Gastrocnemius medialis (tissue), 4 donors: ENCODE measurements at regions of chr1 and their contacts with region 1.

Region 1: DNA sequence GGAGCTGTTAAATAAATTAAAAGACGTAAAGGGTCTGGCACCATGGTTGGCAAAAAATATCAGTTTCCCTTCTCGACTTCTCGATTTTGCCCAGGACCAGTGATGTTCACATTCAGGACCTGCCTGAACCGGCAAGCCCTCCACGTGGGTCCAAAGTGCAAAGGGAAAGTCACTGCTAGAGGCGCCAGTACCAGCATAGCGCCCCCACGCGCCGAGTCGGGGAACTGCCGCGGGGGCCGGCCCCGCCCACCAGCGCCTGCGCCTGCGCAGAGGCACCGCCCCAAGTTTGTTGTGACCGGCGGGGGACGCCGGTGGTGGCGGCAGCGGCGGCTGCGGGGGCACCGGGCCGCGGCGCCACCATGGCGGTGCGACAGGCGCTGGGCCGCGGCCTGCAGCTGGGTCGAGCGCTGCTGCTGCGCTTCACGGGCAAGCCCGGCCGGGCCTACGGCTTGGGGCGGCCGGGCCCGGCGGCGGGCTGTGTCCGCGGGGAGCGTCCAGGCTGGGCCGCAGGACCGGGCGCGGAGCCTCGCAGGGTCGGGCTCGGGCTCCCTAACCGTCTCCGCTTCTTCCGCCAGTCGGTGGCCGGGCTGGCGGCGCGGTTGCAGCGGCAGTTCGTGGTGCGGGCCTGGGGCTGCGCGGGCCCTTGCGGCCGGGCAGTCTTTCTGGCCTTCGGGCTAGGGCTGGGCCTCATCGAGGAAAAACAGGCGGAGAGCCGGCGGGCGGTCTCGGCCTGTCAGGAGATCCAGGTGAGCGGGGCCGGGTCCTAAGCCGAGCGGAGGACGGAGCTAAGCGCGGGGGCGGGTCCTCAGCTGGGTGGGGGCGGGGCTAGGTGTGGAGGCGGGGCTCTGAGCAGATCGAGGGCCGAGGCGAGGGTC is at the start of gene PINK1:
- DNase-seq: peak; percentile 66 to 81
- ATAC-seq: peak; percentile 81 to 86
- H3K4me3 ChIP-seq: peak within 1 kb of the TSS; percentile 79 to 96 (median 88)
- H3K27ac ChIP-seq: peak within 1 kb of the TSS; percentile 93 to 99 (median 97)
- H3K4me1 ChIP-seq: peaks cover 17 to 22% of the 10 kb centered on the region in 2 donors
- H3K27me3 ChIP-seq: no peaks in the 10 kb centered on the region
- CTCF ChIP-seq: peak; percentile 97 to 100 (median 99)
- POLR2A ChIP-seq: peak; percentile 97
- total RNA-seq, gene PINK1: 376 to 478 (median 414) TPM

Region 2: GRCh38 chr1:20361806-20362640 is 271.4 kb before region 1 on chr1:
- in situ Hi-C with region 1: no loop called
- intact Hi-C with region 1: loop called (anchors 10 kb)
- DNase-seq: peak in 1 of 2 donors; percentile 48
- ATAC-seq: peak in 1 of 2 donors; percentile 44
- H3K4me3 ChIP-seq: no peak overlapping the region
- H3K27ac ChIP-seq: no peak overlapping the region
- H3K4me1 ChIP-seq: peaks cover 26 to 37% of the 10 kb centered on the region in 2 donors
- H3K27me3 ChIP-seq: peaks cover 16 to 25% (median 19%) of the 10 kb centered on the region in 3 donors
- CTCF ChIP-seq: peak; percentile 54 to 81 (median 79)
- POLR2A ChIP-seq: no peak

Region 3: DNA sequence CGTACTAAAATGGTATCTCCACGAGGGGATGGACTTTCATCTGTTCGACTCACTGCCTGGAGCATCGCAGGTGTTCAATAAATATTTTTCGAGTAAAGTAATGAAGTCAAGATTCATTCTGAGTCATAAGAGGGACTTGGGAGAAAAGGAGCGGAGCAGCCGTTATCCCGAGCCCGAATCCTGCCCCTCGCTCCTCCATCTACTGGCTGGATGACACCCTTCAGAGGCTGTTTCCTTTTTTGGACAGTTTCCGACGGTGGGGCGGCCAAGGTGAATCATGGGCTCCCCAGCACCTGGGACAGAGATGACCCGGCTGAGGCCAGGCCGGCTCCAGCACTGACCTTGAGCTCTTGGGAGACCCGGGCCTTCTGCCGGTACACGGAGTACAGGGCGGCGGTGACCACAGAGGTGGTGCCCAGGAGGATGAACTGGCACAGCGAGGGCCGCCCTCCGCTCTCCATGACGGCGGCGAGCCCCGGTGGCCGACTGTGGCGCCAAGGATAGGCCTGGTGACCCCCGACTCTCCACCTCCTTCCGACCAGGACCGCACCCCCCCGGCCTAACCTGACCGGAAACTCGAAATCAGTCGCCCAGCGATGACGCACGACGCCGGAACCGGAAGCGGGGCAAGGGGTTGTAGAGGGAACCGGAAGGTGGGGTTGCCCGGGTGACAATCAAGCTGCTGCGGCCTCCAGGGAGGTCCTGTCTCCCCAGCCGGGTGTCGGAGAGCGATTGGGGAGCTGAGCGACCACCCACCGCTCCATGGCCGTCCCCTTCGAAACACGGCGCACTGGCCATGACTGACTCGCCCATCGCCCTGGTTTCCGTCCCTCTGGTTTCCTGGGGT is 125.6 kb before region 1 on chr1 and contains the start of gene MUL1:
- in situ Hi-C with region 1: no loop called
- intact Hi-C with region 1: loop called (anchors 5 kb)
- DNase-seq: peak; percentile 91 to 94
- ATAC-seq: peak; percentile 99
- H3K4me3 ChIP-seq: peak within 1 kb of the TSS; percentile 70 to 99 (median 86)
- H3K27ac ChIP-seq: peak within 1 kb of the TSS; percentile 80 to 90 (median 90)
- H3K4me1 ChIP-seq: peaks cover 40 to 50% of the 10 kb centered on the region in 2 donors
- H3K27me3 ChIP-seq: no peaks in the 10 kb centered on the region
- CTCF ChIP-seq: no peak
- POLR2A ChIP-seq: peak; percentile 67 to 85
- total RNA-seq, gene MUL1: 32.8 to 44.5 (median 38.8) TPM

Region 4: DNA sequence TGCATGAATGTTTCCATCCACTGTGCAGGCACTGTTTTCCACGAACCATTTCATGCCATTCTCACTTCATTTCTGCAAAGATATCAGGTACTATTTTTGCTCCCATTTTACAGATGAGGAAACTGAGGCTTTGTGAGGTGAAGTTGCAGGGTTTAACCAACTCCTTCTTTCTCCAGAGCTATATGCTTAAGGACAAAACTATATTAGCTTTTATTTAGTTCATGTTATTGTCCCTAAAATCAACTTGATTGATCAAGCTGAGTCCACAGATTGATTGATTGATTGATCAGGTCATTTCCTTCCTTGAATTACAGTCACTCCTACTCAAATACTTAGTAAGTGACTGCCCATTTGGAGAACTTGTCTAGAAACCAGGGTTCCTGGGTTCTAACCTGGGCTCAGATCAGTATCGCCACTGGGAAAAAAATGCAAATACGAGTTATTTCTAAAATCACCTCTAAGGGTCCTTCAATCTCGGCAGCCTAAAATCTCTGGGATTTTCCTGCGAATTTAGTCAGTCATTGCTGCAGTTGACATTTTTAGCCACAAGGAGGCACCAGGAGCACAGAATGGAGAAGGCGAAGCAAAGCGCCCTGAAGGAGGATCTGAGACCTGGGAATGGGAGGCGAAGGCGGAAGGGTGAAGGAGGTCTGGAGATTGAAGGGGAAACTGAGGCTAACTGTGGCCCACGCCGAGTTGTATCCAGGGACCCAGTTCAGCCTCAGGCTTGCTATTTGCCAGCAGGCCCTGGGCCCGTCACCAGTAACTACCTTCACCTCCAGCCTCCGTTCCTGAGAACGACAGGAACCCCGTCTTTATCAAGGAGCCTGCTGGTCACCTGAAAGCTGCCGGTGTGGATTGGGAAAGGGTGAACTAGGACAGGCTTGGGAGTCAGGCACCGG is 111.2 kb before region 1 on chr1:
- in situ Hi-C with region 1: loop called in 3 of 4 experiments (anchors 5 kb)
- intact Hi-C with region 1: loop called (anchors 2 kb)
- DNase-seq: peak; percentile 29 to 47
- ATAC-seq: peak; percentile 79 to 82
- H3K4me3 ChIP-seq: no peak overlapping the region
- H3K27ac ChIP-seq: no peak overlapping the region
- H3K4me1 ChIP-seq: no peaks in the 10 kb centered on the region
- H3K27me3 ChIP-seq: no peaks in the 10 kb centered on the region
- CTCF ChIP-seq: peak; percentile 77 to 89 (median 88)
- POLR2A ChIP-seq: no peak

Region 5: GRCh38 chr1:20574686-20575540 is 58.5 kb before region 1 on chr1:
- in situ Hi-C with region 1: no loop called
- intact Hi-C with region 1: loop called (anchors 1 kb)
- DNase-seq: peak; percentile 31 to 65
- ATAC-seq: peak; percentile 68 to 74
- H3K4me3 ChIP-seq: no peak overlapping the region
- H3K27ac ChIP-seq: no peak overlapping the region
- H3K4me1 ChIP-seq: no peaks in the 10 kb centered on the region
- H3K27me3 ChIP-seq: no peaks in the 10 kb centered on the region
- CTCF ChIP-seq: peak; percentile 38 to 66 (median 55)
- POLR2A ChIP-seq: no peak

Region 6: GRCh38 chr1:20661207-20662109 is 28.0 kb after region 1 on chr1 and contains the start of gene DDOST:
- in situ Hi-C with region 1: no loop called
- intact Hi-C with region 1: loop called (anchors 2 kb)
- DNase-seq: peak; percentile 93 to 95
- ATAC-seq: peak; percentile 96 to 98
- H3K4me3 ChIP-seq: peak within 1 kb of the TSS; percentile 81 to 99 (median 90)
- H3K27ac ChIP-seq: peak within 1 kb of the TSS; percentile 80 to 90 (median 87)
- H3K4me1 ChIP-seq: peaks cover 36 to 43% of the 10 kb centered on the region in 2 donors
- H3K27me3 ChIP-seq: no peaks in the 10 kb centered on the region
- CTCF ChIP-seq: peak in 3 of 5 experiments; percentile 29 to 56 (median 52)
- POLR2A ChIP-seq: peak; percentile 38 to 65
- total RNA-seq, gene DDOST: 63.0 to 110 (median 99.8) TPM